ENCODE measurements at regions of chr17 and their contacts with region 1.

Region 1: GRCh38 chr17:77186141-77186604 is 45.4 kb downstream of the SEC14L1 start:
- DNase-seq: no peak
- ATAC-seq: no peak
- H3K4me3 ChIP-seq: no peak overlapping the region
- H3K27ac ChIP-seq: no peak overlapping the region
- H3K4me1 ChIP-seq: peaks cover 7% of the 10 kb centered on the region
- H3K27me3 ChIP-seq: no peaks in the 10 kb centered on the region
- CTCF ChIP-seq: no peak
- POLR2A ChIP-seq: no peak
- RAD21 ChIP-seq: no peak

Region 2: GRCh38 chr17:77140166-77140878 is 45.9 kb before region 1 on chr17:
- CTCF ChIA-PET with region 1: no interaction called
- POLR2A ChIA-PET with region 1: no interaction called
- dilution Hi-C with region 1: no loop called
- in situ Hi-C with region 1: no loop called
- intact Hi-C with region 1: no loop called
- DNase-seq: peak; percentile 96
- ATAC-seq: peak; percentile 97
- H3K4me3 ChIP-seq: peak overlapping the region; percentile 56
- H3K27ac ChIP-seq: peak overlapping the region; percentile 93
- H3K4me1 ChIP-seq: peaks cover 10% of the 10 kb centered on the region
- H3K27me3 ChIP-seq: no peaks in the 10 kb centered on the region
- CTCF ChIP-seq: no peak
- POLR2A ChIP-seq: peak; percentile 84
- RAD21 ChIP-seq: 0 out of 2 replicates have a peak, but pooled peaks have one; percentile 3

Region 3: DNA sequence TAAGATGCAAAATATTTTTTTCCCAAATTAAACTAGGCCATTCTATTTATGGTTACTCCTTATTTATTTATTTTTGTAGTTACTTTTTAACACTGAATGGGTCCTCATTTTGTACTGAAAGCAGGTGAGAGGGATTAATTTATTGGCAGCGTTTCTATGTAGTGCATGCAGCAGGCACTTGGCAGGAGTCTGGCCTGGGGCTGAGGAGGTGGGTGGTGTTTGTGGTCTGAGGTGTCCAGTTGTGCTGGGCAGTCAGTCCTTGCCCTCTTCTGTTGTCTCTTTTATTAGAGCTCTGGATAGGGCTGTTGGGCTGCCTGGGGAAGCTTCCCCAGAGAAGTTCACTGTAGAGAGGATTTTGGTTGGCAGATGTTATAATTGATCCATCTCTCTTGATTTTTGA is 32.7 kb before region 1 on chr17:
- CTCF ChIA-PET with region 1: interaction called, 3 read pairs
- POLR2A ChIA-PET with region 1: no interaction called
- dilution Hi-C with region 1: no loop called
- in situ Hi-C with region 1: no loop called
- intact Hi-C with region 1: loop called (anchors 5 kb)
- DNase-seq: no peak
- ATAC-seq: 0 out of 2 replicates have a peak, but pooled peaks have one; percentile 14
- H3K4me3 ChIP-seq: no peak overlapping the region
- H3K27ac ChIP-seq: no peak overlapping the region
- H3K4me1 ChIP-seq: peaks cover 7% of the 10 kb centered on the region
- H3K27me3 ChIP-seq: no peaks in the 10 kb centered on the region
- CTCF ChIP-seq: no peak
- POLR2A ChIP-seq: no peak
- RAD21 ChIP-seq: no peak